ENCODE measurements at regions of chr7 and their contacts with region 1.

Region 1: GRCh38 chr7:99188221-99188620 is 19.7 kb downstream of the KPNA7 start:
- DNase-seq: no peak
- ATAC-seq: no peak
- H3K4me3 ChIP-seq: no peak overlapping the region
- H3K27ac ChIP-seq: no peak overlapping the region
- H3K4me1 ChIP-seq: peaks cover 3% of the 10 kb centered on the region
- H3K27me3 ChIP-seq: no peaks in the 10 kb centered on the region
- CTCF ChIP-seq: no peak

Region 2: DNA sequence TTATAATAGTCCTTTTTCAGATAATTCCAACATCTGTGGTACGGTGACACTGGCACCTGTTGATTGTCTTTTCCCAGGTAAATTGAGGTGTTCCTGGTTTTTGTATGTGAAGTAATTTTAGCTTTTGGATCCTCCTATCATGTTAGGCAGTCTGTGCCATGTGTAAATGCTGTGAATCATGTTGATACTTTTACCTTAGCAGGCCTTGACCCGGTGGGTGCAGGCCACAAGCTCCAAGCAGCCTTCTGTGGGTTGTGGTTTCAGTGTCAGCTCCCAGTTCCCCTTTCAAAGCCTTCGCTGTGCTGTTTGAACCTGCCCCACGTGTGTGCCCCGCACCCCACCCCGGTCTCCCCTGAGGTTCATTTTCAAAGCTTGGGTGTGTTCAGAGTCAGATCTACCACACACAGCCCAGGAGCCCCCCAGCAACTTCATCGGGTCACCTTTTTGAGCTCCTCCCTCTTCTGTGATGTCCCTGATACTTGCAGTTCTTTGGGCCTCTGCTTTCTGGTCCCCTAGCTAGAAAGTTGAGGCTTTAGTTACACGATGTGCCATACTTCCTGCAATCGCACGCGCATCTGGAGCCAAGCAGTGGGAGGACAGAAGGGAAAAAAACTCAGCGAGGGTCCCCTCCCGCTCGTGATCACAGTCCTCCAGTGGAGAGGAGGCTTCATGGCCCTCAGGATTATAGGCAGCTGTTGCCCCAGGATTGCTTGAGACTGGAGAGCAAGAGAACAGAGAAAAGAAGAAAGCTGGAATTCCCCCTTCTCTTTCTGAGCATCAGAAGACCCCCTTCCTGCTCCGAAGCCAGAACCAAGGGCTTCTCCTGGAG is 985.6 kb before region 1 on chr7:
- CTCF ChIA-PET with region 1: no interaction called
- POLR2A ChIA-PET with region 1: no interaction called
- in situ Hi-C with region 1: no loop called
- intact Hi-C with region 1: no loop called
- DNase-seq: no peak
- ATAC-seq: no peak
- H3K4me3 ChIP-seq: no peak overlapping the region
- H3K27ac ChIP-seq: no peak overlapping the region
- H3K4me1 ChIP-seq: no peaks in the 10 kb centered on the region
- H3K27me3 ChIP-seq: no peaks in the 10 kb centered on the region
- CTCF ChIP-seq: no peak

Region 3: GRCh38 chr7:99221866-99222265 is 33.6 kb after region 1 on chr7:
- CTCF ChIA-PET with region 1: no interaction called
- POLR2A ChIA-PET with region 1: interaction called, 13 read pairs
- in situ Hi-C with region 1: no loop called
- intact Hi-C with region 1: no loop called
- DNase-seq: no peak
- ATAC-seq: no peak
- H3K4me3 ChIP-seq: no peak overlapping the region
- H3K27ac ChIP-seq: no peak overlapping the region
- H3K4me1 ChIP-seq: peaks cover 7% of the 10 kb centered on the region
- H3K27me3 ChIP-seq: no peaks in the 10 kb centered on the region
- CTCF ChIP-seq: no peak